ENCODE measurements at regions of chr10 and their contacts with region 1.

Region 1: DNA sequence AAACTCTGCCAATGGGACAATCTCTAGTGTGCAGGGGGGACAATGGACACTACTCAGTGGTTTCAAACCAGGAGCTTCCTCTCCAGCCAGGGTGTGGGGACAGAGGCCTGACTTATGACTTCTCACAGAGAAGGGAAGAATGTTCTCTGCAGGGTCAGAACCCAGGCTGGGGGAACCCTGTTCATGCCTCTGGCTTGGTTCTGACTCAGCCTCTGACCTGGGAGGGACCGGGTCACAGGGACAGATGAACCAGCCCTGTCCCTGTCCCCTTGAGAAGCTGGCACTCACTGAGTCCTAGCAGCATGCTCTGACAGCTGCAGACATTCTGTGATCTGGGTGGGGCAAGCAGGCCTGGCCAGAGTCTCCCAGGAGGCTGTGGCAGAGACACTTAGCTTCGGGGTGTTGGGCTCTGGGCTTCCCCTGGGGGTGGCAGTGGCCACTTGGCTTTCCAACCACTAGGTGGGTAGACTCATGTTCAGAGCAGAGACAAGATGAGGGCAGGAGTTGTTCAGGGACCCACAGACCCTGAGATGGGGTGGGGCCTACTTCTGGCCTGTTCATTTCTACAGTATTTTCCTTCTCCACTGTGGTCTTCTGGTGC is 13.6 kb downstream of the TSPAN15 start:
- DNase-seq: peak; percentile 51
- ATAC-seq: peak; percentile 61
- H3K4me3 Mint-ChIP-seq: no peak overlapping the region
- H3K27ac Mint-ChIP-seq: peak overlapping the region; percentile 88
- H3K4me1 Mint-ChIP-seq: peaks cover 53% of the 10 kb centered on the region
- H3K27me3 Mint-ChIP-seq: no peaks in the 10 kb centered on the region

Region 2: DNA sequence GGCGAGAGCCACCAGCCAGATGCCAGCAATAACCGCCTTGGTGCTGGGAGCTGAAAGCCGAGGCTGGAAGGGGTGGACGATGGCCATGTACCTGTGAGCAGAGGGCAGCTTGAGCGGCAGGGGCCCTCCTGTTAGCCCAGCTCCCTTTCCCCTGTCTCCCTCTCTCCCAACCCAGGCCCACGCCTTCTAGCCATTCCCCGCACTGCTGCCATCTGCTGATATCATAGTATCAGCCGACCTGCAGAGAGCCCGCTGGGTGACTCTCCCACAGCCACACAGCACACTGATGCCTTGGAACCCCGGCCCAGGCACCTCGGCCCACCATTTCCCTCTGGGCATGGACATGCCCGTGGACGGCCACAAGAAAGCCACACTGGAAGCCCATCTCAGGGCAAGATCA is 49.9 kb before region 1 on chr10:
- CTCF ChIA-PET with region 1: no interaction called
- DNase-seq: no peak
- ATAC-seq: no peak
- H3K4me3 Mint-ChIP-seq: no peak overlapping the region
- H3K27ac Mint-ChIP-seq: no peak overlapping the region
- H3K4me1 Mint-ChIP-seq: peaks cover under 1% of the 10 kb centered on the region
- H3K27me3 Mint-ChIP-seq: no peaks in the 10 kb centered on the region

Region 3: DNA sequence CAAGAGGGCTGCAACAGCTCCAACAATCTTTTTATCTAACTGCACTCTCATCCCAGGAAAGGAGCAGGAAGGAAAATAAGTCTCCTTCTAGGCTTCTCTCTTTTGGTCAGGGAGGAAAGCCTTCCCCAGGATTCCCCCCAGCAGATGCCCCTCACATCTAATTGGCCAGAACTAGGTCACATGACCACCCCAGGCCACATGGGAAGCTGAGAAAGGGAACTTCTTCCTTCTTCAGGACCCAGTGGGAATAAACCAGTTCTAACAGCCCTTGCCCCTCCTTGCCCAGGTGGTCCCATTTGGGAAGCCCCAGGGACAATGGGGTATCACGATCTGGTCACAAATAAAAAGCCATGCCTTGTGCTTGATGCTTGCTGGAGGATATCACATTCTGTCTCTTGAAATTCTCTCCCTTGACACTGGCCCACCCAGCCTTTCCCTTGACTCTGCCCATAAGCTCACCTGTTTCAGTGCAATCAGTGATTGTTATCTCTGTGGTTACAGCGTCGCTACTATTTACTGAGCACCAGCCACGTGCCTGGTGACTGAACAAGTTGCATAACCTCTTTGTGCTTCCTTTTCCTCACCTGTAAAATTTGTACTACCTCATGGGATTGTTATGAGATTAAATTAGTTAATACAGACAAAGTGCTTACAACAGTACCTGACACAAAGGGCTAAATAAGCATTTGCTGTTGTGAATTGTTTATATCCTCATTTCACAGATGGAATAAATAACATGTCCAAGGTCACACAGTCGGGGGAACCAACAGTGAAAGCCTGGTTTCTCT is 39.2 kb before region 1 on chr10:
- CTCF ChIA-PET with region 1: interaction called, 10 read pairs
- DNase-seq: no peak
- ATAC-seq: peak; percentile 28
- H3K4me3 Mint-ChIP-seq: no peak overlapping the region
- H3K27ac Mint-ChIP-seq: no peak overlapping the region
- H3K4me1 Mint-ChIP-seq: peaks cover 40% of the 10 kb centered on the region
- H3K27me3 Mint-ChIP-seq: no peaks in the 10 kb centered on the region

Region 4: DNA sequence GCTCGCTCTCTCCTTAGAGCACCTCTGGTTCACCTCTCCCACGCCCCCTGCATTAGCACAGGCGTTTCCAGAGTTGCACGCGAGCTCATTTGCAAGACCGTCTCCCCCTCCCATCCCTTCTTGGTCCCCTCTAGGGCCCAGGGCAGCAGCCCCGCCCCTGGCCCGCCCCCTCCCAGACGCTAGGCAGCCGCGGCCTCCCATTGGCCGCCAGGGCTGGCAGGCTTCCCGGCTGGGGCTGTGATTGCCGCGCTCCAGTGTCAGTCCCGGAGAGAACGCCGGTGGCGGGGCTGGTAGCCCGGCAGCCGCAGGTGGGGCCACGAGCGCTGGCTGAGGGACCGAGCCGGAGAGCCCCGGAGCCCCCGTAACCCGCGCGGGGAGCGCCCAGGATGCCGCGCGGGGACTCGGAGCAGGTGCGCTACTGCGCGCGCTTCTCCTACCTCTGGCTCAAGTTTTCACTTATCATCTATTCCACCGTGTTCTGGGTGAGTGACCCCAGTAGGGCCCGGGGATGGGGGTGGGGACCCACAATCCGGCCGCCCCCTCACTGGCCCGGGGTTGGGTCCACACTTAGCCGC is 13.6 kb before region 1 on chr10 and contains the start of gene TSPAN15:
- CTCF ChIA-PET with region 1: interaction called, 16 read pairs
- DNase-seq: peak; percentile 84
- ATAC-seq: peak; percentile 94
- H3K4me3 Mint-ChIP-seq: peak within 1 kb of the TSS; percentile 73
- H3K27ac Mint-ChIP-seq: no peak within 1 kb of the TSS
- H3K4me1 Mint-ChIP-seq: peaks cover 28% of the 10 kb centered on the region
- H3K27me3 Mint-ChIP-seq: peaks cover 17% of the 10 kb centered on the region
- total RNA-seq, gene TSPAN15: 2.5 to 4.2 TPM

Measured in activated CD8-positive, alpha-beta memory T cell treated with anti-CD3 and anti-CD28 coated beads, Interleukin-2, amount 10 ng/mL, durations not matched to agents 7 days and 5 days (primary cell).